ENCODE measurements at regions of chr19 and their contacts with region 1.

Region 1: DNA sequence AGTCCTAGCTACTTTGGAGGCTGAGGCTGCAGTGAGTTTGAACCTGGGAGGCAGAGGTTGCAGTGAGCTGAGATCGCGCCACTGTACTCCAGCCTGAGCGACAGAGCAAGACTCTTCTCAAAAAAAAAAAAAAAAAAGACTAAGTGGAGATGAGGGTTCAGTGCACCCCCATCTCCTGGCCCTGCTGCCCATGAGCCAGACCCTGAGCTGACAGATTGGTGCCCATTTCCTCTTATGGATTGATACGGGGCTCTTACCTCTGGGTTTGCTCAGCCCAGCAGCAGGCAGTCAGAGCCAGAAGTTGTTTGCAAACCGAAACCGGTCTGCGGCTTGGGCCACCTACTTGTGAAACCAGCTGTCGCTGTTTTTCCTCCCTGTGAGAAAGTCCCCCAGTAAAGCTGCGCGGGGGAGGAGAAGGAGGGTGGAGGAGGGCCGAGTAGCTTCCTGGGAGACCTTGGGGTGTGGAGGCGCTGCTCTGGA is 36.9 kb downstream of the ARRDC2 start:
- DNase-seq: peak; percentile 98
- H3K4me3 Mint-ChIP-seq: peak overlapping the region; percentile 64
- H3K27ac Mint-ChIP-seq: peak overlapping the region; percentile 21
- H3K4me1 Mint-ChIP-seq: peaks cover 42% of the 10 kb centered on the region
- H3K27me3 Mint-ChIP-seq: peaks cover 3% of the 10 kb centered on the region

Region 2: DNA sequence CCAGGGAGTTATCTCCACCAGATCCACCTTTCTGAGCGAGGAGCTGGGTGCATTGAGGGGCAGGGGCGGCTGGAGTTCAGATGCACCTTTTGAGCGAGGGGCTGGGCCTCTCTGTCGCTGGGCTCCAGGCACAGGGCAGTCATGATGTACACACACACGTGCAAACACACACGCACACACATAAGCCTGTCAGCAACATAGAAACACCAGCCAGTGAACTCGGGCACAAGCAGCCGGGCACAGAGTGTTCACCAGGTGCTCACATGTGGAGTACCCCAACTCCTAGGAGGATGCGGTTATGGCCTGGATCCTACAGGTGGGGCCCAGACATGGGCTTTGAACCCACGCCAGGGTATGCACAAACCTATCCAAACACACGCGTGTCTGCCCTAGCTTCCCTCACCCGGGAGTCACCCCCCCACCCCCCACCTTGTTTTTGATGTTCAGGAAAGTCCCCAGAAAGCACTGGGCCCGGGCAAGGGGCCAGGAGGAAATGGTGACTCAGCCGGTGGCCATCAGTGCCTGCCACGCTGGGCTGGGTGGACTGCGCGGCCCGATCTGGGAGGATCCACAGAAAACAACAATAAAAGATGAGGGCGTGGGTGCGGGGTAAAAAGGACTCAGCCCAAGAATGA is 23.6 kb before region 1 on chr19:
- CTCF ChIA-PET with region 1: interaction called, 5 read pairs
- intact Hi-C with region 1: loop called (anchors 1 kb)
- DNase-seq: peak; percentile 80
- H3K4me3 Mint-ChIP-seq: peak overlapping the region; percentile 78
- H3K27ac Mint-ChIP-seq: peak overlapping the region; percentile 79
- H3K4me1 Mint-ChIP-seq: peaks cover 64% of the 10 kb centered on the region
- H3K27me3 Mint-ChIP-seq: no peaks in the 10 kb centered on the region

Region 3: GRCh38 chr19:18058208-18059030 is 13.6 kb after region 1 on chr19:
- CTCF ChIA-PET with region 1: interaction called, 5 read pairs
- intact Hi-C with region 1: loop called (anchors 1 kb)
- DNase-seq: peak; percentile 86
- H3K4me3 Mint-ChIP-seq: no peak overlapping the region
- H3K27ac Mint-ChIP-seq: peak overlapping the region; percentile 59
- H3K4me1 Mint-ChIP-seq: peaks cover 11% of the 10 kb centered on the region
- H3K27me3 Mint-ChIP-seq: no peaks in the 10 kb centered on the region

Region 4: GRCh38 chr19:18074190-18074589 is 29.3 kb after region 1 on chr19:
- CTCF ChIA-PET with region 1: no interaction called
- intact Hi-C with region 1: no loop called
- DNase-seq: no peak
- H3K4me3 Mint-ChIP-seq: no peak overlapping the region
- H3K27ac Mint-ChIP-seq: no peak overlapping the region
- H3K4me1 Mint-ChIP-seq: peaks cover 8% of the 10 kb centered on the region
- H3K27me3 Mint-ChIP-seq: no peaks in the 10 kb centered on the region

Measured in activated naive CD4-positive, alpha-beta T cell treated with anti-CD3 and anti-CD28 coated beads for 36 hours (primary cell).